Activated CD4-positive, alpha-beta memory T cell treated with anti-CD3 and anti-CD28 coated beads for 36 hours (primary cell): ENCODE measurements at regions of chr2 and their contacts with region 1.

Region 1: DNA sequence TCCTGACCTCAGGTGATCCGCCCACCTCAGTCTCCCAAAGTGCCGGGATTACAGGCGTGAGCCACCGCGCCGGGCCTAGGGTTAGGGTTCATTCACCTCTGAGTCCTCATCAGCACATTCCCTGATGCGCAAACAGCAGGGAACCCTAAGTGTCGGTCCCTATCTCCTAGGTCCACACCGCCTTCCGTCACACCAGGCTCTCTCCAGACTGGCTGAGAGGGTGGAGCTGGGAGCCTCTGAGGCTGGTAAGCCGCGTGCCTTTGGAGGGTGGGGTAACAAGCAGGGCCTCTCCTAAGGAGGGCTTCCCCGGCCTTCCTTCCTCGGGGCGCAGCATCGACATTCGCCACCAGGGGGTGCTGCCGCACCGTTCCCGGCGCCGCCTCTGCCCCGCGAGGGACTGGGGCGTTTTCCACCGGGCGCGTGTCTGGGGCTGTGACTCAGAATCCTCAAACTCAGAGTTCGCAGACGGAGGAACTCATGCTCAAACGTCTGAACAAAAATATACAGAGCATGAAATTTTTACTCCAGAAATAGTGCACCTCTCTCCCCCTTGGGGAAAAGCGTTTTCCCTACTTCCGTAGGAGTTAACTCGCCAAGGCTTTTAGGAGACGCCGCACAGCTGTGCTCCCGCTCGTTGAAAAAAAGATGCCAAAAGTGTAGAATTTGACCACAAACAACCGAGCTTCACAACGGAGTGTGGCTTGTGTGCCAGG is 63.9 kb upstream of the ASAP2 start:
- DNase-seq: peak; percentile 89
- H3K4me3 Mint-ChIP-seq: no peak overlapping the region
- H3K27ac Mint-ChIP-seq: no peak overlapping the region
- H3K4me1 Mint-ChIP-seq: no peaks in the 10 kb centered on the region
- H3K27me3 Mint-ChIP-seq: peaks cover 14% of the 10 kb centered on the region

Region 2: DNA sequence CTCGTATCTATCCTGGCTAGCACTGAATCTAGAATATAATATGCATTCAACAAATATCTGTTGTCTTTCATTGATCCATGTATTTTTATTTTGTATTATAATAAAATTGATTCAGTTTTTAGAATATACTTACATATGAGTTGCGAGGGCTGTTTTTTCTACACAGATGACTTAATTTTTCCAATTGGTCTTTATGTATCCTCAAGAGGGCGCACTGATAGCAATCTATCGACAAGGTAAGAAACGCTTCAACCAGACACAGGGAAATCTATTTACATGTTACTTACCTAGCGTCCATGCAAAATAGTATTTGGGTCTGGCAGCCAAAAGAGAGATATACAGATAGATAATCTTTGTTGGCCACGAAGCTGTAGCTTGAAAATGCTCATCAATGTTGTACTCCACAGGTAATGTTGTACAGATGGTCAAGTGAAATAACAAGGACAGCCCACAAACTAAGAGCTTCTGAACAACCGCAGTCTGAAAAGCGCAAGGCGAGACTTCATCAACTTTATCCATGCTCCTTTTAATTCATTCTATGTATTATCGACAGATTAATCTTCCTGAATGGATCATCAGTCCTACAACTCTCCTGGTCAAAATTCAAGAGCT is 269.8 kb before region 1 on chr2:
- CTCF ChIA-PET with region 1: interaction called, 4 read pairs
- POLR2A ChIA-PET with region 1: no interaction called
- intact Hi-C with region 1: loop called (anchors 1 kb)
- DNase-seq: no peak
- H3K4me3 Mint-ChIP-seq: no peak overlapping the region
- H3K27ac Mint-ChIP-seq: no peak overlapping the region
- H3K4me1 Mint-ChIP-seq: no peaks in the 10 kb centered on the region
- H3K27me3 Mint-ChIP-seq: peaks cover 3% of the 10 kb centered on the region

Region 3: GRCh38 chr2:9205963-9206948 is 63.5 kb after region 1 on chr2 and contains the start of gene ASAP2:
- CTCF ChIA-PET with region 1: interaction called, 4 read pairs
- POLR2A ChIA-PET with region 1: no interaction called
- intact Hi-C with region 1: loop called (anchors 5 kb)
- DNase-seq: peak; percentile 61
- H3K4me3 Mint-ChIP-seq: peak within 1 kb of the TSS; percentile 59
- H3K27ac Mint-ChIP-seq: no peak within 1 kb of the TSS
- H3K4me1 Mint-ChIP-seq: peaks cover 4% of the 10 kb centered on the region
- H3K27me3 Mint-ChIP-seq: peaks cover 43% of the 10 kb centered on the region
- total RNA-seq, gene ASAP2: 0.26 to 0.97 TPM

Region 4: DNA sequence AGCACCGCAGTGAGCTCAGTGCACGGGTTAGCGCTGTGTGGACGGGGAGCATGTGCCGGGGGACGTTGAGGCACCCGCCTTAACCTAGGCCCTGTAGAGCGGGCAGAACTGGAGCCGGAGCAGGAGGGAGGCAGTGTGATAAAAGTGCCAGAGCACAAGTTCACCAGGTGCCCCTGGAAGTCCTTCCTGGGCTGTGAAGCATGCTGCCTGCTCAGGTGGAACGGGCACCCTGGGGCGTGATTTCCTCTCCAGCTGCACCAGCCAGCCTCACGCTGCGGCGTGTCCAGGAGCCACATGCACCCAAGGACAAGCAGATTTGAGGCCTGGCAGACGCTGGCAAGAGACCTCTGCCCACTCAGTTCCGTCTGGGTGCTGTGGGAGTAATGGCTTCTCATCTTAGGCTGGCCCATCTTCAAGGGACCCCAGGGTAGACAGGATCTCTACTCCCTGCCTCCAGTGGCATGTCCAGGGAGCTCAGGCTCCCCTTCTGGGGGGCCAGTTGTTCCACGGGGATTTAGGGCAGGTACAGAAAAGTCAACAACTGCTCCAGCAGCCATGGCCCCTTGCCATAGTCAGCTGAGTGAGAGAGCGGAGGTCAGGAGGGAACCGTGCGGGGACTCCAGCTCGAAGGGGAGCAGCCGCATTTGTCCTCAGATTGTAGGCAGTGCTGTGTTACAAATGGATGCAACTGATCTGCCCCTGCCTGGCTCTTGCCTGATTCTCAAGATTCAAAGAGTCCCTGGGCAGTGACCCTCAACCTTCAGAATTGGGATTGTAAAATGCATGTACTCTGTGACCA is 230.6 kb after region 1 on chr2:
- CTCF ChIA-PET with region 1: interaction called, 9 read pairs
- POLR2A ChIA-PET with region 1: interaction called, 3 read pairs
- intact Hi-C with region 1: loop called (anchors 5 kb)
- DNase-seq: no peak
- H3K4me3 Mint-ChIP-seq: no peak overlapping the region
- H3K27ac Mint-ChIP-seq: no peak overlapping the region
- H3K4me1 Mint-ChIP-seq: peaks cover 20% of the 10 kb centered on the region
- H3K27me3 Mint-ChIP-seq: peaks cover 9% of the 10 kb centered on the region

Region 5: GRCh38 chr2:9423100-9423921 is 280.6 kb after region 1 on chr2 and contains the starts of genes CPSF3 and ITGB1BP1:
- CTCF ChIA-PET with region 1: no interaction called
- POLR2A ChIA-PET with region 1: no interaction called
- intact Hi-C with region 1: loop called (anchors 10 kb)
- DNase-seq: peak; percentile 98
- H3K4me3 Mint-ChIP-seq: peak within 1 kb of the TSS; percentile 87
- H3K27ac Mint-ChIP-seq: peak within 1 kb of the TSS; percentile 88
- H3K4me1 Mint-ChIP-seq: peaks cover 35% of the 10 kb centered on the region
- H3K27me3 Mint-ChIP-seq: no peaks in the 10 kb centered on the region
- total RNA-seq, gene CPSF3: 77.5 to 78.1 TPM
- total RNA-seq, gene ITGB1BP1: 136 to 142 TPM